CD8-positive, alpha-beta T cell (primary cell): ENCODE measurements at regions of chr6 and their contacts with region 1.

Region 1: GRCh38 chr6:100001915-100002388 is 7.9 kb upstream of the MCHR2 start:
- DNase-seq: peak in 8 of 9 experiments; percentile 5 to 53 (median 24)
- ATAC-seq: peak; percentile 55
- H3K4me3 ChIP-seq: no peak overlapping the region
- H3K4me3 Mint-ChIP-seq: no peak overlapping the region
- H3K27ac ChIP-seq: no peak overlapping the region
- H3K27ac Mint-ChIP-seq: no peak overlapping the region
- H3K4me1 ChIP-seq: no peaks in the 10 kb centered on the region
- H3K4me1 Mint-ChIP-seq: no peaks in the 10 kb centered on the region
- H3K27me3 ChIP-seq: peaks cover 0 to 3% of the 10 kb centered on the region in 2 experiments
- H3K27me3 Mint-ChIP-seq: peaks cover 27% of the 10 kb centered on the region
- CTCF ChIP-seq: peak; percentile 85

Region 2: GRCh38 chr6:99761711-99762110 is 240.2 kb before region 1 on chr6:
- CTCF ChIA-PET with region 1: no interaction called
- POLR2A ChIA-PET with region 1: no interaction called
- intact Hi-C with region 1: no loop called
- DNase-seq: no peak
- ATAC-seq: no peak
- H3K4me3 ChIP-seq: no peak overlapping the region
- H3K4me3 Mint-ChIP-seq: no peak overlapping the region
- H3K27ac ChIP-seq: no peak overlapping the region
- H3K27ac Mint-ChIP-seq: no peak overlapping the region
- H3K4me1 ChIP-seq: no peaks in the 10 kb centered on the region
- H3K4me1 Mint-ChIP-seq: no peaks in the 10 kb centered on the region
- H3K27me3 ChIP-seq: no peaks in the 10 kb centered on the region
- H3K27me3 Mint-ChIP-seq: peaks cover 5% of the 10 kb centered on the region
- CTCF ChIP-seq: no peak

Region 3: GRCh38 chr6:100479179-100480035 is 477.5 kb after region 1 on chr6:
- CTCF ChIA-PET with region 1: interaction called, 3 read pairs
- POLR2A ChIA-PET with region 1: no interaction called
- intact Hi-C with region 1: loop called in 1 of 2 experiments (anchors 5 kb)
- DNase-seq: peak in 2 of 9 experiments; percentile 30 to 48
- ATAC-seq: no peak
- H3K4me3 ChIP-seq: no peak overlapping the region
- H3K4me3 Mint-ChIP-seq: no peak overlapping the region
- H3K27ac ChIP-seq: no peak overlapping the region
- H3K27ac Mint-ChIP-seq: no peak overlapping the region
- H3K4me1 ChIP-seq: no peaks in the 10 kb centered on the region
- H3K4me1 Mint-ChIP-seq: no peaks in the 10 kb centered on the region
- H3K27me3 ChIP-seq: no peaks in the 10 kb centered on the region
- H3K27me3 Mint-ChIP-seq: peaks cover 19% of the 10 kb centered on the region
- CTCF ChIP-seq: peak; percentile 51

Region 4: GRCh38 chr6:100664274-100665040 is 662.5 kb after region 1 on chr6:
- CTCF ChIA-PET with region 1: interaction called, 6 read pairs
- POLR2A ChIA-PET with region 1: no interaction called
- intact Hi-C with region 1: loop called (anchors 2 to 5 kb)
- DNase-seq: peak in 2 of 9 experiments; percentile 33 to 52
- ATAC-seq: peak; percentile 34
- H3K4me3 ChIP-seq: no peak overlapping the region
- H3K4me3 Mint-ChIP-seq: no peak overlapping the region
- H3K27ac ChIP-seq: peak overlapping the region in 1 of 2 experiments; percentile 37
- H3K27ac Mint-ChIP-seq: peak overlapping the region; percentile 83
- H3K4me1 ChIP-seq: no peaks in the 10 kb centered on the region
- H3K4me1 Mint-ChIP-seq: peaks cover 10% of the 10 kb centered on the region
- H3K27me3 ChIP-seq: no peaks in the 10 kb centered on the region
- H3K27me3 Mint-ChIP-seq: no peaks in the 10 kb centered on the region
- CTCF ChIP-seq: peak; percentile 79